Panc1 (cell line): ENCODE measurements at regions of chr3 and their contacts with region 1.

Region 1: DNA sequence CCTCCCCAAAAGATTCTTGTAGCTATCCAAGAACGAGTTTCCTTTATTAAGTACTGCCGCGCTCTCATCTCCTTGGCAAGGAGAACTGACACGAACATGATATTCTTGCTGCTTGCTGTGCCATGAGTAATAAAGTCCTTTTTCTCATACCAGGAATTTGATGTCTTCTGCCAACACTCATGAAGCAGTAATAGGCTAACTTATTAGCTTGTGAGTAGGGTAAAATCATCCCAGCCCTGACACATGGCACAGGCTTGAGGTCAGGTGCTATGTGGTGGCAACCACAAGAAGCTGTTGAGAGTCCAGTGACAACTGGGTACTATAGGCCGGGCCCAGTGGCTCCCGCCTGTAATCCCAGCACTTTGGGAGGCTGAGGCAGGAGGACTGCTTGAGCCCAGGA is 22.7 kb upstream of the UBXN7 start:
- DNase-seq: no peak
- ATAC-seq: 0 out of 2 replicates have a peak, but pooled peaks have one; percentile 38
- H3K4me3 ChIP-seq: no peak overlapping the region
- H3K27ac ChIP-seq: no peak overlapping the region
- H3K4me1 ChIP-seq: no peaks in the 10 kb centered on the region
- H3K27me3 ChIP-seq: no peaks in the 10 kb centered on the region
- CTCF ChIP-seq: no peak

Region 2: GRCh38 chr3:196274585-196274984 is 180.3 kb before region 1 on chr3:
- CTCF ChIA-PET with region 1: interaction called, 15 read pairs
- POLR2A ChIA-PET with region 1: no interaction called
- in situ Hi-C with region 1: no loop called
- intact Hi-C with region 1: no loop called
- DNase-seq: no peak
- ATAC-seq: no peak
- H3K4me3 ChIP-seq: no peak overlapping the region
- H3K27ac ChIP-seq: no peak overlapping the region
- H3K4me1 ChIP-seq: peaks cover 5% of the 10 kb centered on the region
- H3K27me3 ChIP-seq: no peaks in the 10 kb centered on the region
- CTCF ChIP-seq: no peak

Region 3: DNA sequence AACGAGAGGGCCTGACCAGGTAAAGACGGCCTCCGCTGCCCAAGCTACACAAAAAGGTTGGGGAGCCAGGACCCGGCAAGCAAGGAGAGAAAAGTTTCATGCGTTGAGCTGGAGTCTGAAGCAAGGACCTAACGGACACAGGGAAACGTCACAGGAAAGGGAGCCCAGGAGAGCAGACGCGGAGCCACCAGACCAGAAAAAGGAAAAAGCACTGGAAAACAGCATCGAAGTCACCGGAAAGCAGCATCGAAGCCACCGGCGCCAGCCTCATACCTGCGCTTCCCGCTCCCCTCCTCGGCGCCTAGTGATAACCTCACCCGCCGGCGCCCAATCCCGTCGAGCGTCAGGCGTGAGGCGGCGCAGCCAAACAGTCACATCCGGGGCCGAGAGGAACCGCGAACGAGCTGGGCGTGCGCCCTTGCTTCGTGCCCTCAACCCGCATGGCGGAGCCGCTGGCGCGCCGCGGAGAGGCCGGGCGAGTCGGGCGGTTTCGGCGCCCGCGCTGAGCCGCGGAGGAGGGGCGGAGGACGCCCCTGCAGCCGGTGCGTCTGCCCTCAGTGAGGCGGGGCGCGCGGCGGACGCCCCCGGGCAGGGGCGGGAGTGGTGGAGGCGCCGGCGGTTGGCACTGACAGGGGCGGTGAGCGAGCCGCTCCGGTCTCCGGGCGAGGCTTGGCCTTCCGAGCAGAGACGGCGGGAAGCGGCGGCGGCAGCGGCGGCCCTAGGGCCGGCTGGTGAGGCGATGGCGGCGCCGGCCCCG is 113.5 kb after region 1 on chr3 and contains the starts of genes FBXO45 and WDR53:
- CTCF ChIA-PET with region 1: no interaction called
- POLR2A ChIA-PET with region 1: interaction called, 14 read pairs
- in situ Hi-C with region 1: no loop called
- intact Hi-C with region 1: no loop called
- DNase-seq: peak; percentile 64
- ATAC-seq: peak; percentile 98
- H3K4me3 ChIP-seq: peak within 1 kb of the TSS; percentile 87 to 89
- H3K27ac ChIP-seq: peak within 1 kb of the TSS; percentile 98
- H3K4me1 ChIP-seq: peaks cover 32% of the 10 kb centered on the region
- H3K27me3 ChIP-seq: no peaks in the 10 kb centered on the region
- CTCF ChIP-seq: no peak
- total RNA-seq, gene FBXO45: 21.6 TPM
- total RNA-seq, gene WDR53: 18.6 TPM

Region 4: DNA sequence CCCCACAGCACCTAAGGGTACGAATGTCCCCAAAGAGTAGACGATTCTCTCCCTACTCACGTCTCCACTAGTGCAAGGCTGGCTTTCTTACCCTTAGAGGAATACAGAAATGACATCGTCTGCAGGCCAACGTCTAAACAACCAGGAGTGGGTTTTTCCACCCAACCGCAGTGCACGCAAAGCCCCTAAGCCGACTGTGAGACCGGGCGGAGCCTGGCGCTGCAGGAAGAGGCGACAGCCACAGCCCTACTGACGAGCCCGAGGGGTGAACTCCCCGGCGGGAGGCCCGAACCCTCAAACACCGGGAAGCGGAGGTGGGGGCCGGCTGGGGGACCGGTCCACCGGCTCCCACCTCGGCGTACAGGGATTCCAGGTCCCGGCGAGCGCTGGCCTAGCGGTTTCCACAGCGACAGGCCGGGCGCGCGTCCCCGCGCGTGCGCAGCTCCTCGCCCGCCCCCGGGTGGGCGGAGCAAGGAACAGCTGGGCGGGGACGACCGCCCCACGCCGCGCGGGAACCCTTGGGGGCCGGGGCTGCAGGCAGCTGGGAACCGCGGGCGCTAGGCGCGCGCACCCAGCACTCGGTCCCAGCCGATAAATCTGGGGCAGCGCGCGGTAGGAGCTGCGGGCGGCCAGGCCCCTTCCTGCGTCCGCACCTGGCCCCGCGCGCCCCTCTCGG is 257.0 kb after region 1 on chr3 and contains the starts of genes CEP19 and PIGX:
- CTCF ChIA-PET with region 1: no interaction called
- POLR2A ChIA-PET with region 1: interaction called, 12 read pairs
- in situ Hi-C with region 1: no loop called
- intact Hi-C with region 1: no loop called
- DNase-seq: peak; percentile 48
- ATAC-seq: peak; percentile 95
- H3K4me3 ChIP-seq: peak within 1 kb of the TSS; percentile 83 to 92
- H3K27ac ChIP-seq: peak within 1 kb of the TSS; percentile 93
- H3K4me1 ChIP-seq: peaks cover 19% of the 10 kb centered on the region
- H3K27me3 ChIP-seq: no peaks in the 10 kb centered on the region
- CTCF ChIP-seq: no peak
- total RNA-seq, gene CEP19: 7.1 TPM
- total RNA-seq, gene PIGX: 85.7 TPM